Breast epithelium (tissue), 4 donors: ENCODE measurements at regions of chr16 and their contacts with region 1.

Region 1: DNA sequence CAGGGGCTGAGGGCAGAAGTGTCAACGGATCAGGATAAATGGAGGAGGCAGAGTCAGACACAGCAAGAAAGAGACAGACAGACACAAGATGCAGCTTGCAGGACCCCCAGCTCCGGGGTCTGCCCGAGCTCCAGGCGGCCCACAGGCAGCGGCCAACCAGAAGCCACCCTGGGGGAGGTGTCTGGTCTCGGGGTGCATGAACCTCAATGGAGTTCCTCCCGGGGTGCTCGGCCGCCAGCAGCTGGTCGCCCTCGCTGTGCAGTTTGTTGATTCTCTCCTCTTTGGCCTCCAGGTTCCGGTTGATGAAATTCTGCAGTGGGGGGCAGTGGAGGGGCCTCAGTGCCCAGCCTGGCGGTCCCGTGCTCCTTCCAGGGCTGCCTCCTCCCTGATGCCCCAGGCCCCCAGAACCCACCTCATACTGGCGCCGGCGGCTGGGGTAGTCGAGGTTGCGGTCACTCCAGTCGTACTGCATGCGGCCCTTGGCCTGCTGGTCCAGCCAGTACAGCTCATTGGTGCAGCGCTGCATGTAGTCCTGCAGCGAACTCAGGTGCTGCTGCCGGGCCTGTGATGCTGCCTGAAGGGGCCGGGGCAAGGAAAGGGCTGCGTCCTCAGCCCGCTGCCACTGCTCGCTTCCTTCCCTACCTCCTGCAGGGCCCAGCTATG is 38.0 kb downstream of the PPL start:
- DNase-seq: no peak
- H3K4me3 ChIP-seq: no peak overlapping the region
- H3K27ac ChIP-seq: peak overlapping the region; percentile 38 to 78
- H3K4me1 ChIP-seq: peaks cover 0 to 7% of the 10 kb centered on the region in 2 donors
- H3K27me3 ChIP-seq: no peaks in the 10 kb centered on the region
- CTCF ChIP-seq: no peak
- POLR2A ChIP-seq: no peak

Region 2: DNA sequence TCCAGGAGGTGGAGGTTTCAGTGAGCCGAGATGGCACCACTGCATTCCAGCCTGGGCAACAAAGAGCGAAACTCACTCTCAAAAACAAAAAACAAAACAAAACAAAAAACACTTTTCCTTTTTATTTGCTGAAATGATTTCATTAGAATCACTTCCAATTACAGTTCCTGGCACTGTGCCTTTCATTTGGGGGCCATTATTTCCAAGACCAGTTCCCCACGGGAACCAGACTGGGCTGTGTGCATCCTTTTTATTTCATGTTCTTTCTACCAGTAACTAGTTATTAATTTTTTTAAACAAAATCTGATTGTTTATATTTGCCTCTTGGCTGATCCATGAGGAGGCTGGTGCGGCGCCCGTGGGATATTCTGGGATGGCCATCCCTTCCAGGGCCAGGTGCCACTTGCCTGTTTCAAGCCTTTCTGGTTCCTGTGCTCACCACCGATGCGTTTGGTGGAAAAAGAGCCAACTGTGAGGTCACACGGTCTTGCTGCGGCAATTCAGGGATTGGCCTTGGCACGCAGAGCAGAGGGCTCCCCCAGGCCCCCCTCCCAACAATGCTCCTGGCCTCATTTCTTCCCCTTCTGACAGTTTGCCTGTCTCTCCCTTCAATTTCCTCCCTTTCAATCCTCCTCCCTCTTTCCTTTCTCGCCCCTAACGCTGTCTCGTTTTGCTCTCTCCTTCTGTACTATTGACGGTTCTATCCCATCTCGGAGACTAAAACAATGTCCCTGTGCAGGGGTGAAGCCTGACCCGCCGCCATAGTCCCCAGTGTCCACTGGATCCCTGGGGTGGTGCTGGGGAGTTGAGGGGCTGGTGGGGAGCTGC is 297.7 kb before region 1 on chr16:
- intact Hi-C with region 1: no loop called
- DNase-seq: peak in 1 of 2 donors; percentile 64
- H3K4me3 ChIP-seq: peak overlapping the region in 2 of 3 donors; percentile 3 to 37
- H3K27ac ChIP-seq: no peak overlapping the region
- H3K4me1 ChIP-seq: no peaks in the 10 kb centered on the region
- H3K27me3 ChIP-seq: no peaks in the 10 kb centered on the region
- CTCF ChIP-seq: no peak
- POLR2A ChIP-seq: no peak

Region 3: DNA sequence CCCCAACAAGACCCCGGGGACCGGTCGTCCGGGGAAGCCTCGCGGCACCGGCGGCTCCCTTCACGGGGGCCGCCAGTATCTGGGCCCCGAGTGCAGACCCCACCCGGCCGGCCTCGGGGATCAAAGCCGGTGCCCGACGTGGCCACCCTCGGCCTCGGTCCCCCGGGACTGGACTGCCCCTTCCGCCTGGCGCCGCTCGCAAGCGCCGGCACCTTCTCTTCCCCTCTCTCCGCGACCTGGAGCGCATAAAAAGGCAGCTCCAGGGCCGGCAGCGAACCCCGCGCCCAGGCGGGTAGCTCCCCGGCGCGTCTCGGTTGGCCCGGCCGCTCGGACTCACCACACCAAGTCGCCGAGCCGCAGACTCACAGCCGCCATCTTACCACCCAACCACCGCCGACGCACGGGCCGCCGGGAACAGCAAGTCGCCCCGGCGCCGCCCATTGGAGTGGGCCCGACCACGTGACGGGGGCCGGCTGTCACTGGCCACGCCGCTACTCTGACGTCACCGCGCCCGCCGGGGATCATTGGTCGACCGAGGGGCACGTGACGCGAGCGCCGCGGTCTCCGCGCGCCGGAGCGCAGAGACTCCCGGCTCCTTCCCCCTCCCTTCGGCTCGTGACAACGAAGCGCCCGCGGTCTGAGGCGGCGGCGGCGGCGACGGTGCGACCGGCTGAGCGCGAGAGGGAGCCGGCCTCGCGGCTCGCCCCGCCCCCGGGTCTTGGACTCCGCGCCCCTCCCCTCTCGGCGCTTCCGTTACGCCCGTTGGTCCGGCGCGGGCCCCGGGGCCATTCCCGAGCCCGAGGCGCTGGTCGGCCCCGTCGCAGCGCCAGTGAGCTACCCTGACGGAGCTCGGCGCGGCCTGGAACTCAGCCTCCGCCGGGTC is 51.8 kb before region 1 on chr16 and contains the starts of genes GLYR1 and UBN1:
- intact Hi-C with region 1: loop called (anchors 2 kb)
- DNase-seq: peak; percentile 99 to 100
- H3K4me3 ChIP-seq: peak within 1 kb of the TSS; percentile 94 to 100 (median 96)
- H3K27ac ChIP-seq: peak within 1 kb of the TSS; percentile 94 to 96
- H3K4me1 ChIP-seq: peaks cover 0 to 13% of the 10 kb centered on the region in 2 donors
- H3K27me3 ChIP-seq: no peaks in the 10 kb centered on the region
- CTCF ChIP-seq: no peak
- POLR2A ChIP-seq: peak; percentile 69
- total RNA-seq, gene GLYR1: 57.2 to 79.0 (median 58.1) TPM
- total RNA-seq, gene UBN1: 28.8 to 32.8 (median 29.1) TPM

Region 4: GRCh38 chr16:4870138-4870671 is 28.7 kb before region 1 on chr16:
- intact Hi-C with region 1: loop called (anchors 2 kb)
- DNase-seq: no peak
- H3K4me3 ChIP-seq: no peak overlapping the region
- H3K27ac ChIP-seq: no peak overlapping the region
- H3K4me1 ChIP-seq: peaks cover 0 to 10% of the 10 kb centered on the region in 2 donors
- H3K27me3 ChIP-seq: no peaks in the 10 kb centered on the region
- CTCF ChIP-seq: no peak
- POLR2A ChIP-seq: no peak